ENCODE measurements at regions of chr20 and their contacts with region 1.

Region 1: GRCh38 chr20:61253264-61253639 is 1.2 kb downstream of the CDH4 start:
- DNase-seq: peak; percentile 45 to 60
- ATAC-seq: peak; percentile 74 to 79
- H3K4me3 ChIP-seq: peak overlapping the region; percentile 76
- H3K27ac ChIP-seq: peak overlapping the region; percentile 71 to 95
- H3K4me1 ChIP-seq: peaks cover 14% of the 10 kb centered on the region; the same call in 2 of the 3 replicates
- CTCF ChIP-seq: no peak; the same call in 2 of the 3 replicates
- EP300 ChIP-seq: no peak
- POLR2A ChIP-seq: no peak
- RAD21 ChIP-seq: peak; percentile 17 to 21; a peak in 1 of 5 replicates

Region 2: DNA sequence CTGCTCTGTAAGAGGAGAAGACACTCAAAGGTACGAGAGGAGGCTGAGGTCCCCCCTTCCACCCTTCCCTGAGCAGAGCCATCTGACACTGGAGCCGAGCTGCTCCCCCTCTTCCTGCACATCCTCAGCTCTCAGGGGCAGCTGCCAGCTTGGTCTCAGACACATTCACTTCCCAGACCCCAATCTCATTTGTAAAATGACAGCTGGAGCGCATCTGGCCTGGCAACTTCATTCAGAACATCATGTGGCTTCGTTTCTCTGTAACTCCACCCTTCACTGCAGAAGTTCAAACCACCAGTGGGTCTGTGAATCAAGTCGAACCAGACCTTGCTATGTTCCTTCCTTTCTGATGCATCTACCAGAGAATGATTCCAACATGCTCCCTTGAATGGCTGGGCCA is 146.8 kb before region 1 on chr20:
- CTCF ChIA-PET with region 1: no interaction called
- POLR2A ChIA-PET with region 1: no interaction called
- DNase-seq: no peak
- ATAC-seq: no peak
- H3K4me3 ChIP-seq: no peak overlapping the region
- H3K27ac ChIP-seq: no peak overlapping the region
- H3K4me1 ChIP-seq: no peaks in the 10 kb centered on the region
- CTCF ChIP-seq: no peak
- EP300 ChIP-seq: no peak
- POLR2A ChIP-seq: no peak
- RAD21 ChIP-seq: no peak

Region 3: DNA sequence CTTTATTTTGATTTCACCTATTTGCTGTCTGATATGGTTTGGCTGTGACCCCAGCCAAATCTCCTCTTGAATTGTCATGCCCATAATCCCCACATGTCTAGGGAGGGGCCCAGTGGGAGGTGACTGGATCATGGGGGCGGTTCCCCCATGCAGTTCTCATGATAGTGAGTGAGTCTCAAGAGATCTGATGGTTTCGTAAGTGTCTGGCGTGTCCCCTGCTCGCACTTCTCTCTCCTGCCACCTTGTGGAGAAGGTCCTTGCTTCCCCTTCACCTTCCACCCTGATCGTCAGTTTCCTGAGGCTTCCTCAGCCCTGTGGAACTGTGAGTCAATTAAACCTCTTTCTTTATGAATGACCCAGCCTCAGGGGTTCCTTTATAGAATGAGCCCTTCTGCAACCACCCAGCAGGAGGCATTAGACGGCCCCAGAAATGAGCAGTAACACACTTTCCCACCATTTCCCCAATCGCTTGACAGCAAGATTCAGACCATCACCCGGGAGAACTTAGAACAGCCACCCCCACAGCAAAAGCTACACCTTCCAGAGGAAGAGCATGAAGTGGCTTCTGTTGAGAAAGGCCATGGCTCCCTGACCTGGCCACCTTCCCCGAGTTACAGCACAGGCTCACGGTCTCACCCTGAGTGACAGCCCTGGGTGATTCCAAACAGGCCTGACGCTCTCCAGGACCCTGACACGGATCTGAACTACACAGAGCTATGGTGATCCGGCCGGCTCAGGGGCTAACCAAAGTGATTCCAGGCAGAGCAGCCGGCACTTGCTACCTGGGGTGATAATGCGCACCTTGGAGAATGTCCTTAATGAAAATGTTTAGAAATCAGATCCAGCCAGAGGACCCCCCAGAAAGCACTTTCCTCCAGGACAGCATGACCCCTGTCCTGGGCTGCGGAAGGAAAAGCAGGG is 132.4 kb before region 1 on chr20:
- CTCF ChIA-PET with region 1: interaction called, 4 read pairs
- POLR2A ChIA-PET with region 1: interaction called, 20 read pairs
- DNase-seq: peak in 1 of 2 experiments; percentile 92
- ATAC-seq: peak; percentile 8 to 66; a peak in 3 of 6 replicates
- H3K4me3 ChIP-seq: no peak overlapping the region
- H3K27ac ChIP-seq: peak overlapping the region; percentile 86 to 93
- H3K4me1 ChIP-seq: peaks cover 53% of the 10 kb centered on the region
- CTCF ChIP-seq: peak; percentile 66
- EP300 ChIP-seq: 0 out of 5 replicates have a peak, but pooled peaks of 1 of the 2 experiments have one; percentile 24
- POLR2A ChIP-seq: no peak
- RAD21 ChIP-seq: peak; percentile 79 to 80

Region 4: GRCh38 chr20:61185841-61186601 is 67.2 kb before region 1 on chr20:
- CTCF ChIA-PET with region 1: interaction called, 11 read pairs
- POLR2A ChIA-PET with region 1: interaction called, 7 read pairs
- DNase-seq: peak; percentile 66 to 85
- ATAC-seq: peak; percentile 95 to 96
- H3K4me3 ChIP-seq: no peak overlapping the region
- H3K27ac ChIP-seq: peak overlapping the region; percentile 81 to 87
- H3K4me1 ChIP-seq: peaks cover 39% of the 10 kb centered on the region
- CTCF ChIP-seq: no peak
- EP300 ChIP-seq: peak; percentile 57 to 82; a peak in 2 of 5 replicates
- POLR2A ChIP-seq: no peak
- RAD21 ChIP-seq: no peak; a peak in 1 of 5 replicates

Region 5: GRCh38 chr20:61240814-61241213 is 12.4 kb before region 1 on chr20:
- CTCF ChIA-PET with region 1: interaction called, 32 read pairs
- POLR2A ChIA-PET with region 1: no interaction called
- DNase-seq: no peak
- ATAC-seq: no peak
- H3K4me3 ChIP-seq: no peak overlapping the region
- H3K27ac ChIP-seq: no peak overlapping the region
- H3K4me1 ChIP-seq: no peaks in the 10 kb centered on the region
- CTCF ChIP-seq: no peak
- EP300 ChIP-seq: no peak
- POLR2A ChIP-seq: no peak
- RAD21 ChIP-seq: no peak